Astrocyte of the cerebellum (primary cell): ENCODE measurements at regions of chr15 and their contacts with region 1.

Region 1: GRCh38 chr15:24956111-24956838 is 1.5 kb downstream of the SNRPN start:
- DNase-seq: peak; percentile 41
- H3K4me3 ChIP-seq: peak overlapping the region; percentile 93
- CTCF ChIP-seq: no peak

Region 2: DNA sequence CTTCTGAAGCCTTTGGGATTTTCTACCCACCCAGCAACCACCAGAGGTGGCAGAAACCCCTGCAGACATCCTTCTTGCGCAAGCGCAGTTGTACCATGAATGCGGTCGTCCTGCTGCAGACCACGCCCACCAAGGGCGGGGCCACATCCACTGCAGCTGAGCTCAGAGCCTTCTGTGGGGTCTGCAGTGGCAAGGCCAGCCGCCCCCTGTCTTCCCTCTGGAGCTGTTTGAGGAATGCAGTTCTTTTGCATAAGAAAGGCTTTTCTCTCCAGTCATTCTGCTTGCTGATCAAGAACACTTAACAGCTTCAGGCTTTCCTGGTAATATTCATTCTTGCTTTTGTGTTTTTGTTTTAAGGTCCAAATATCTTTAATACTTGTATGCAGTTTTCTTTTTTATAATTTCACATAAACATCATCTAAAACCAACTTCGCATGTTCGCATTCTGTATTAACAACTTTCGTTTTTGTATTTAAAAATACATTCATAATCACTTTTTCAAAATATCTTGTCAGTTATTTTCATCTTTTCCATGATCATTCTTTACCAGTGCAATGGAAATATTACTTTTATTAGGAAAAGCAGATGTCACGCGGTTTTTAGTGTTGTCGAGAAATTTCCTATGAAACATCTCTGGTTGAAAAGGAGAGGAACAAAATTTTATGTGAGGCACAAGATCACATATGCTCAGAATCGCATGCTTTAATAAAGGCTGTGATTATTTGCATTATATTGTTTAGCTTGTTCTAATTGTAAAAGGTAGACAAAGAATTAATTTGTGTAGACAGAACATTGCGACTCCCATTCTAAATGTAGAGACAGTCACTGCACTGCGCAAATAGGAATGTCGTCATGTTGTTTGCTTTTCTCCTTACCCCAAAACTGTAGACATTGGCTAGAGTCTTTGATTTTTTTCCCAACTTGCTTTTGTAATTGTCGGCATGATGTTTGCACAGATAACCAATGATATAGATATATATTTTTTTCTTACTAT is 99.6 kb before region 1 on chr15:
- in situ Hi-C with region 1: no loop called
- DNase-seq: no peak
- H3K4me3 ChIP-seq: peak overlapping the region; percentile 17
- CTCF ChIP-seq: no peak

Region 3: DNA sequence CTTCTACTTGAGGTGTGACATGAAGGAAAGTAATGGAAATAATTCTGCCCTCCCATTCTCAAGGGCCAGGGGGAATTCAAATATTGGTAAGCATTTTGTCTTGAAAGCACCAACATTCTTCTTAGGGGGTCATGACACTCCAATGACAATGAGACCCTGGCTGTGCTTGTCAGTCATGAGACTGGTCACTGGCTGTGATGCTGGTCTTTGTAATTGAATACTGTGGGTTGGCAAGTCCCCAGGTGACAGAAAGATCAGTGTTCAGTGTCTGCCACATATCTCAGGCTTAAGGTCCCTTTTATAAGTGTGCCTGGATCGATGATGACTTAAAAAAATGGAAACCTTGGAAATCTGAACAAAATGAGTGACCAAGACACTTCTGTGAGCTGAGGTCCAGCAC is 149.9 kb after region 1 on chr15:
- in situ Hi-C with region 1: loop called (anchors 25 kb)
- DNase-seq: no peak
- H3K4me3 ChIP-seq: no peak overlapping the region
- CTCF ChIP-seq: no peak

Region 4: DNA sequence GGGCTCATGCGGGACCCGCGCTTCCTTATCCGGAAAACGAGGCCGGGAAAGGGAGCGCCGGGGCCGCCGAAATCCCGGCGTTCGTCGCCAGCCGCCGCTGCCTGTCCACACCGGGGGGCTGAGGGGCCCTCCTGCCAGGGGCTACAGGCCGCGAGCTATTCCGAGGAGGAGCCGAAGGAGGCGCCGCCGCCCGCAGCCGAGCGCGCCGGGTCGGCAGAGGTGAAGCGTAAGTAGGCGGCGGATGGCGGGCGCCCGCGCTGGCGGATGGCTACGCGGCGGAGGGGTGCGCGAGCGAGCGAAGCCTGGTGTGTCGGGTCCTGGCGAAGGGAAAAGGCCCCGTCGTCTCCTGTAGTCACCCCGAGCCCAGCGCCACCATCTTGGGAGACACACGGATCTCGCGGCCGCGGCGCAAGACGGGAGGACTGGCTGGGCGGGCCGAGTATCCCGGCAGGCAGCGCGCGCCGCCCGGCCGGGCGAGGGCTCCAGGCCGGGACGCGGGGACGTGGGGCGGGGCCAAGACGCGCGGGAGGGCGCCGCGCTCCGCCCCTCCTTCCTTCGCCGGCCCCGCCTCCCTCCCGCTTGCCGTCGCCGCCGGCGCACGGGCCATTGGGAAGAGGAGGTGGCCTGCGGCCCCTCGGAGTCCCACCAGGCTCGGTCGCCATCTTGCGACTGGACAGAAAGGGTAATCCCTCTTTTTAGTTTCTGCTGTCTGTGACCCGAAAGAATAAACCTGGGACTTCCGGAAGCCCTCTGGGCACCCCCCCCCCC is 482.5 kb after region 1 on chr15 and contains the start of gene UBE3A:
- in situ Hi-C with region 1: loop called (anchors 25 kb)
- DNase-seq: peak; percentile 76
- H3K4me3 ChIP-seq: peak within 1 kb of the TSS; percentile 89
- CTCF ChIP-seq: peak; percentile 23